HCT116 (cell line): ENCODE measurements at regions of chr4 and their contacts with region 1.

Region 1: GRCh38 chr4:155353923-155354540 is 22.7 kb downstream of the MAP9 start:
- DNase-seq: peak; percentile 51
- ATAC-seq: peak; percentile 100
- H3K4me3 ChIP-seq: no peak overlapping the region
- H3K27ac ChIP-seq: no peak overlapping the region
- H3K4me1 ChIP-seq: no peaks in the 10 kb centered on the region
- H3K27me3 ChIP-seq: no peaks in the 10 kb centered on the region
- CTCF ChIP-seq: peak; percentile 77 to 85 (median 81)
- POLR2A ChIP-seq: no peak
- RAD21 ChIP-seq: peak; percentile 81

Region 2: DNA sequence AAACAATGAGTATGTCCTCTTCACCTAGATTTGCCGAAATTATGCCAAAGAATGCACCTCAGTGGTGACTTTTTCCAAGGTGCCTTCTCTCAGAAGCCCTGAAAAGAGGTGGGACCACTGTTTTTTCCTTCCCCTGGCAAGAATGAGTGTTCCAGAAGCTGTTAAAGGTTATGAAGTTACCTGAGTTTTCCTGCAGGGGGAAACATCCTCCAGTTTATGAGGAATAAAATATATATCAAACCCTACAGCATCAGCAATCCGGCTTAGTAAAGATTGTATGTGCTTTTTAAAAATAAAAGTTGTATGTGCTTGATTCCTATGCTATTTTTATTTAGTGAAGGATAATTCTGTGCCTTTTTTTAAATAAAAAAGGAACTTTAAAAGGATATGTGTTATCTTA is 499.7 kb before region 1 on chr4:
- CTCF ChIA-PET with region 1: no interaction called
- POLR2A ChIA-PET with region 1: no interaction called
- RAD21 ChIA-PET with region 1: no interaction called
- intact Hi-C with region 1: loop called (anchors 5 kb)
- DNase-seq: peak; percentile 16
- ATAC-seq: peak; percentile 82
- H3K4me3 ChIP-seq: no peak overlapping the region
- H3K27ac ChIP-seq: no peak overlapping the region
- H3K4me1 ChIP-seq: no peaks in the 10 kb centered on the region
- H3K27me3 ChIP-seq: no peaks in the 10 kb centered on the region
- CTCF ChIP-seq: peak; percentile 32 to 51 (median 46); a peak in 5 of 6 replicates
- POLR2A ChIP-seq: no peak
- RAD21 ChIP-seq: peak; percentile 58

Region 3: GRCh38 chr4:155025762-155026457 is 328.1 kb before region 1 on chr4:
- CTCF ChIA-PET with region 1: interaction called, 8 read pairs
- POLR2A ChIA-PET with region 1: no interaction called
- RAD21 ChIA-PET with region 1: no interaction called
- intact Hi-C with region 1: loop called (anchors 1 kb)
- DNase-seq: peak; percentile 65
- ATAC-seq: peak; percentile 99
- H3K4me3 ChIP-seq: no peak overlapping the region
- H3K27ac ChIP-seq: no peak overlapping the region
- H3K4me1 ChIP-seq: no peaks in the 10 kb centered on the region
- H3K27me3 ChIP-seq: no peaks in the 10 kb centered on the region
- CTCF ChIP-seq: peak; percentile 75 to 93 (median 82)
- POLR2A ChIP-seq: no peak
- RAD21 ChIP-seq: peak; percentile 73

Region 4: DNA sequence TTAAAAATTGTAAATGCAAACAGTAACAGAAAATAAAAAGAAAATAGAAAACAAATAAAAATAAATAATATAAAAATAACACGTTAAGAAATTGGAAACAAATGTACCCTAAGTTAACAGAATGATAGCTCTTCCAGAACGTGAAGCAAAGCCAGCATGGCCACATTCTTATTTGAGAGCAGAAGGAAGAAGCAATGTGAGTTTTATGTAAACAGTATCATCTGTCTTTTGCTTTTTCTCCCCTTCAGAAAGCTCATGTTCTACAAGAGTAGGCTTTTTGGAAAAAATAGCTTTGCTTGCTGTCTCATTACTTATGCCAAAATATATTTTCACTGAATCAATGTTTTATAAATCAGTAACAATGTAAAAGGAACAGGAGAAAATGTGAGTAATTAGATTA is 126.9 kb before region 1 on chr4:
- CTCF ChIA-PET with region 1: no interaction called
- POLR2A ChIA-PET with region 1: no interaction called
- RAD21 ChIA-PET with region 1: no interaction called
- intact Hi-C with region 1: no loop called
- DNase-seq: no peak
- ATAC-seq: no peak
- H3K4me3 ChIP-seq: no peak overlapping the region
- H3K27ac ChIP-seq: no peak overlapping the region
- H3K4me1 ChIP-seq: no peaks in the 10 kb centered on the region
- H3K27me3 ChIP-seq: no peaks in the 10 kb centered on the region
- CTCF ChIP-seq: no peak
- POLR2A ChIP-seq: no peak
- RAD21 ChIP-seq: no peak